ENCODE measurements at regions of chr12 and their contacts with region 1.

Region 1: GRCh38 chr12:47715393-47715876 is 9.6 kb upstream of the RPAP3 start:
- DNase-seq: peak; percentile 62 to 92 (median 66)
- ATAC-seq: peak; percentile 83
- H3K4me3 ChIP-seq: no peak overlapping the region
- H3K27ac ChIP-seq: no peak overlapping the region
- H3K4me1 ChIP-seq: peaks cover 3 to 4% of the 10 kb centered on the region in 2 experiments; a peak in 4 of 5 replicates
- H3K27me3 ChIP-seq: no peaks in the 10 kb centered on the region
- CTCF ChIP-seq: peak; percentile 80 to 89 (median 84)
- EP300 ChIP-seq: no peak
- POLR2A ChIP-seq: no peak
- RAD21 ChIP-seq: peak; percentile 85 to 91

Region 2: GRCh38 chr12:47767216-47767724 is 51.8 kb after region 1 on chr12:
- CTCF ChIA-PET with region 1: interaction called, 14 read pairs
- POLR2A ChIA-PET with region 1: no interaction called
- in situ Hi-C with region 1: loop called (anchors 10 kb)
- intact Hi-C with region 1: loop called (anchors 1 kb)
- DNase-seq: peak; percentile 51 to 79 (median 58)
- ATAC-seq: peak; percentile 74
- H3K4me3 ChIP-seq: no peak overlapping the region
- H3K27ac ChIP-seq: no peak overlapping the region
- H3K4me1 ChIP-seq: peaks cover 15 to 30% of the 10 kb centered on the region in 2 experiments; a peak in 4 of 5 replicates
- H3K27me3 ChIP-seq: no peaks in the 10 kb centered on the region
- CTCF ChIP-seq: peak; percentile 75 to 87 (median 76)
- EP300 ChIP-seq: no peak
- POLR2A ChIP-seq: no peak
- RAD21 ChIP-seq: peak; percentile 58 to 77

Region 3: GRCh38 chr12:47779301-47779942 is 64.0 kb after region 1 on chr12:
- CTCF ChIA-PET with region 1: interaction called, 21 read pairs
- POLR2A ChIA-PET with region 1: interaction called, 4 read pairs
- in situ Hi-C with region 1: loop called (anchors 10 kb)
- intact Hi-C with region 1: loop called (anchors 1 kb)
- DNase-seq: peak; percentile 71 to 92 (median 76)
- ATAC-seq: peak; percentile 75
- H3K4me3 ChIP-seq: no peak overlapping the region
- H3K27ac ChIP-seq: no peak overlapping the region
- H3K4me1 ChIP-seq: peaks cover 47 to 78% of the 10 kb centered on the region in 2 experiments
- H3K27me3 ChIP-seq: no peaks in the 10 kb centered on the region
- CTCF ChIP-seq: peak; percentile 90 to 97 (median 95)
- EP300 ChIP-seq: peak; percentile 13; the same call in 1 of the 2 replicates
- POLR2A ChIP-seq: no peak
- RAD21 ChIP-seq: peak; percentile 89 to 94

Region 4: DNA sequence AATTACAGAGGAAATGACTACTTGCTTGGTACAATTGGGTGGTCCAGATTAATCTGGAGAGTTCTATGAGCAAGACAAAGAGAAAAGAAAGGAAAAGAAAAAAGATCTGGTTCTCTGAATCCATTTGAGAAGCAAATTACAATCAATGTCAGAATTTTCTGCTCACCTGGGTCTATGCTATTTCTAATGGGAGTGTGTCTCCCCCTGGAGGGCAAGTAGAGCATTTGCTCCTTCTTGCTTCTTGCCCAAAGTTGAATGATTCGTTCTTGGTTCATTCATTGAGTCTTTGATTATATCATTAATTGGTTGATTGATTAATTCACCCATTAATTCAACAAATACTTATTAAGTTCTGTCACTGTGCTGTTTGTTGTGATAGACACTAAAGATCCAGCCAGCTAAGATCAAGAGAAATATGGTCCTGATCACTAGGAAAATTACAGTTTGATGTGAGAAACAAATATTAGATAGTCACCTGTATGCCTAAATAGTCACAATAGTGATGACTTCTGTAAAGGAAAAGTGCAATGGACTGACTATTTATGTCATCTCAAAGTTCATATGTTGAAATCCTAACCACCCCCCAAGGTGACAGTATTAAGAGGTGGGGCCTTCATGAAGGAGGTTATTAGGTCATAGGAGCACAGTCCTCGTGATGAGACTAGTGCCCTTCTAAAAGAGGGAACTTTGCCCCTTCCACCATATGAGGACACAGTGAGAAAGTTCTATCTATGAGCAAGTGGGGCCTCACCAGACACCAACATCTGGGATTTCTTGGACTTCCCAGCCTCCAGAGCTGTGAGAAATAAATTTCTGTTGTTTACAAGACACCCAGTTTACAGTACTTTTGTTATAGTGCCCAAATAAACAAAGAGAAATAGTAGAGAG is 449.9 kb after region 1 on chr12:
- CTCF ChIA-PET with region 1: interaction called, 3 read pairs
- POLR2A ChIA-PET with region 1: no interaction called
- in situ Hi-C with region 1: no loop called
- intact Hi-C with region 1: loop called (anchors 10 kb)
- DNase-seq: peak; percentile 58 to 77 (median 61)
- ATAC-seq: peak; percentile 82
- H3K4me3 ChIP-seq: no peak overlapping the region
- H3K27ac ChIP-seq: no peak overlapping the region
- H3K4me1 ChIP-seq: no peaks in the 10 kb centered on the region; a peak in 2 of 5 replicates
- H3K27me3 ChIP-seq: no peaks in the 10 kb centered on the region
- CTCF ChIP-seq: peak; percentile 72 to 92 (median 85)
- EP300 ChIP-seq: no peak
- POLR2A ChIP-seq: no peak
- RAD21 ChIP-seq: peak; percentile 89 to 94